ENCODE measurements at regions of chr6 and their contacts with region 1.

Region 1: GRCh38 chr6:73515204-73515655 is 5.6 kb downstream of the EEF1A1 start:
- DNase-seq: peak in 1 of 4 experiments; percentile 61
- ATAC-seq: peak; percentile 13
- H3K4me3 ChIP-seq: no peak overlapping the region
- H3K27ac ChIP-seq: peak overlapping the region; percentile 72
- H3K4me1 ChIP-seq: peaks cover 0 to 8% of the 10 kb centered on the region in 2 experiments; a peak in 2 of 5 replicates
- H3K27me3 ChIP-seq: no peaks in the 10 kb centered on the region
- CTCF ChIP-seq: no peak
- EP300 ChIP-seq: no peak
- POLR2A ChIP-seq: no peak
- RAD21 ChIP-seq: no peak

Region 2: DNA sequence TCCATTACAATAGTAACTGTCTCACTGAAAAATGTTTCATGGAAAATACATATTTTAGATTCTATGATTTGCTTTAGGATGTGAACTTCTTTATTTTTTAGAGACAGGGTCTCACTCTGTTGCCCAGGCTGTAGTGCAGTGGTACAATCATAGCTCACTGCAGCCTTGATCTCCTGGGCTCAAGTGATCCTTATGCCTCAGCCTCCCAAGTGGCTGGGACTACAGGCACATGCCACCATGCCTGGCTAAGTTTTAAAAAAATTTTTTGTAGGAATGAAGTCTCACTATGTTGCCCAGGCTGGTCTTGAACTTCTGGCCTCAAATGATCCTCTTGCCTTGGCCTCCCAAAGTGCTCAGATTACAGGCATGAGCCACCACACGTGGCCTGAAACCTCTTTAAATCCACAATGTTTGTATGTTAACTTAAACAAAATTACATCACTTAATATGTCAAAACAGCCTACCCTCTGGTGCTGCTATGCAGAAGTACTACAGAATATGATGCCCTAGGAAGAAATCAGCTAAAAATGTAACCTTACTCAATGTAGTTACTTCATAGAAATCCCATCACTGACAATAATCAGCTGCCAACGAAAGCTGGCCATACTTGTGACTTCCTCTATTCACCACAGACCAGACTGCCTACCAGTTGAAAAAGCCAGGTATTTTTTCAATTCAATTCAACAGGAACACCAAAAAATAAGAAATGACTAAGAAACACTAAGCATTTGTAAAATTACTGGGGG is 12.0 kb before region 1 on chr6:
- CTCF ChIA-PET with region 1: no interaction called
- POLR2A ChIA-PET with region 1: interaction called, 32 read pairs
- in situ Hi-C with region 1: no loop called
- intact Hi-C with region 1: no loop called
- DNase-seq: no peak
- ATAC-seq: peak; percentile 21; the same call in 2 of the 3 replicates
- H3K4me3 ChIP-seq: no peak overlapping the region
- H3K27ac ChIP-seq: no peak overlapping the region
- H3K4me1 ChIP-seq: no peaks in the 10 kb centered on the region
- H3K27me3 ChIP-seq: no peaks in the 10 kb centered on the region
- CTCF ChIP-seq: no peak
- EP300 ChIP-seq: no peak
- POLR2A ChIP-seq: no peak
- RAD21 ChIP-seq: no peak

Region 3: DNA sequence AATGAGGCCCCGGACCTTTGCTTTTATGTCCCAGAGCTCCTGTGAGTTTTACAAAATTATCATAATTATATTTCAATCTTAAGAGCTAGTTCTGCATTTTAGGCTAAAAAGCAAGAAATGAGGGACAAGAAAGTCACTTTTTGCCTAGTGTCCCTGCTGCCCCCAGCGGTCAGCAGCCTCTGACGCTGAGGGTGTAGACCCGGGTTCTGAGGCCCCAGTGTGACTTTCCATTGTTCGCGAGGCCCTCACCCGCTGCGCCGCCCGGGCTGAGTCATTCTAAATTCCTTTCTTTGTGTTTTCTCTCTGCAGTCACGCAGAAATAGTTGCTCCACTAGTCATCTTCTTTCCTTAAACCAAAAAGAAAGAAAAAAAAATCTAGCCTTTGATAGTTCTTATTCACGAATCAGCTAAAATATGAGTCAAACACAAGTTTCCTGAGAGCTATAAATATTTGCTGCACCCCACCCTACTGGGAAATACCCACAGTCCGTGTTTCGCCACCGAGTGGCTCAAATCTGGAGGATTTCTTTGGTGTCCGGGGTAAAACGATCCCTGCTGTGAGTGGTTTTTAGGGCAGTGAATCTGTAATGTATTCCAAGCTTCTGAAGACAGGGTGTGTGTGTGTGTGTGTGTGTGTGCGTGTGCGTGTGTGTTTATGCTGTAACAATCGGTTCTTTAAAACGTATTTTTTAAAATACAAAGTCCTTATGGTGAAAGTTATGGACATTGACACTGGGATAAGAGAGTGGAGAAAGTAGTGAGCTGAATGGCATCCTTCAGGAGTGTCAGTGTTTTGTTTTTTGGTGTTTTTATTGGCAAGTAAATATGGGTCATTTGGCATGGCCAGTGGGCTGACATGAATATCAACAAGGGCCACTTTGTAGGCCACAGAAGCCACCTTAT is 65.3 kb after region 1 on chr6:
- CTCF ChIA-PET with region 1: interaction called, 4 read pairs
- POLR2A ChIA-PET with region 1: interaction called, 38 read pairs
- in situ Hi-C with region 1: loop called (anchors 5 kb)
- intact Hi-C with region 1: no loop called
- DNase-seq: peak; percentile 81 to 93 (median 84)
- ATAC-seq: peak; percentile 98
- H3K4me3 ChIP-seq: peak overlapping the region; percentile 23
- H3K27ac ChIP-seq: peak overlapping the region; percentile 93
- H3K4me1 ChIP-seq: peaks cover 16 to 26% of the 10 kb centered on the region in 2 experiments
- H3K27me3 ChIP-seq: no peaks in the 10 kb centered on the region
- CTCF ChIP-seq: peak; percentile 75 to 88 (median 79)
- EP300 ChIP-seq: no peak
- POLR2A ChIP-seq: peak; percentile 76
- RAD21 ChIP-seq: peak; percentile 49 to 57; a peak in 3 of 4 replicates

Region 4: GRCh38 chr6:73585566-73586415 is 70.6 kb after region 1 on chr6:
- CTCF ChIA-PET with region 1: no interaction called
- POLR2A ChIA-PET with region 1: interaction called, 38 read pairs
- in situ Hi-C with region 1: loop called (anchors 5 kb)
- intact Hi-C with region 1: no loop called
- DNase-seq: peak; percentile 44 to 81 (median 58)
- ATAC-seq: peak; percentile 83
- H3K4me3 ChIP-seq: no peak overlapping the region
- H3K27ac ChIP-seq: peak overlapping the region; percentile 82
- H3K4me1 ChIP-seq: peaks cover 7 to 15% of the 10 kb centered on the region in 2 experiments; a peak in 4 of 5 replicates
- H3K27me3 ChIP-seq: no peaks in the 10 kb centered on the region
- CTCF ChIP-seq: no peak
- EP300 ChIP-seq: peak; percentile 75
- POLR2A ChIP-seq: no peak
- RAD21 ChIP-seq: 0 out of 4 replicates have a peak, but pooled peaks of 1 of the 2 experiments have one; percentile 5

Region 5: DNA sequence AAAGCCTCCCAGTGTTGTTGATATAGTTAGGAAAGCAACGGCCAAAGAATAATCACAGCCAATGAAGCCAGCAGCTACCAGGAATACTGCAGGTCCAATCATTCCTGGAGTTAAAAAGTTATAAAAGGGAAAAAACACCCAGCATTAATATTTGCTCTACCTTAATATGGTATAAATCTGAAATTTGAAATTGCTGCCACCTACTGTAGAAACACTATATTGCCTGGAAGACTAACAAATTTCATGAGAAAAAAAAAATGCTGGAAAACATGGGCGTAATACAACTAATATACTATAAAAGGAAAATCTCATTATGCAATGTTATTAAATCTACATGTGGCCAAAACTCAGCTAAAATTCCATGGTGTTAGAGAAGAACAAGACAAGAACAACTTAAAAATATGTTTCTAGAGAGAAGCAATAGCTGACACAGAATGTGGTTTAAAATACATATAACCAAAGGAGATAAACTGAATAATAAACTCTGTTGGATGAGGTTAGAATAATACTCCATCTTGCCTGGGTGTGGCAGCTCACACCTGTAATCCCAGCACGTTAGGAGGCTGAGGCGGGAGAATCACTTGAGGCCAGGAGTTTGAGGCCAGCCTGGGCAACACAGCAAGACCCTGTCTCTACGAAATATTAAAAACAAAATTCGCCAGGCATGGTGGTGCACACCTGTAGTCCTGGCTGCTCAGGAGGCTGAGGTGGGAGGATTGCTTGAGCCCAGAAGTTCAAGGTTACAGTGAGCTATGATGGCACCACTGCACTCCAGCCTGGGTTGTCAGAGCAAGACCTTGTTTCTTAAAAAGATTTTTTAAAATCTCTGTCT is 95.4 kb after region 1 on chr6:
- CTCF ChIA-PET with region 1: interaction called, 36 read pairs
- POLR2A ChIA-PET with region 1: interaction called, 34 read pairs
- in situ Hi-C with region 1: no loop called
- intact Hi-C with region 1: loop called (anchors 1 kb)
- DNase-seq: peak in 2 of 4 experiments; percentile 28 to 46
- ATAC-seq: peak; percentile 64
- H3K4me3 ChIP-seq: no peak overlapping the region
- H3K27ac ChIP-seq: no peak overlapping the region
- H3K4me1 ChIP-seq: no peaks in the 10 kb centered on the region
- H3K27me3 ChIP-seq: no peaks in the 10 kb centered on the region
- CTCF ChIP-seq: peak; percentile 41 to 72 (median 50); a peak in 4 of 6 replicates
- EP300 ChIP-seq: no peak
- POLR2A ChIP-seq: no peak
- RAD21 ChIP-seq: peak; percentile 83 to 86

Region 6: GRCh38 chr6:73631849-73632248 is 116.6 kb after region 1 on chr6:
- CTCF ChIA-PET with region 1: no interaction called
- POLR2A ChIA-PET with region 1: interaction called, 26 read pairs
- in situ Hi-C with region 1: no loop called
- intact Hi-C with region 1: no loop called
- DNase-seq: no peak
- ATAC-seq: no peak
- H3K4me3 ChIP-seq: no peak overlapping the region
- H3K27ac ChIP-seq: no peak overlapping the region
- H3K4me1 ChIP-seq: no peaks in the 10 kb centered on the region
- H3K27me3 ChIP-seq: no peaks in the 10 kb centered on the region
- CTCF ChIP-seq: no peak
- EP300 ChIP-seq: no peak
- POLR2A ChIP-seq: no peak
- RAD21 ChIP-seq: no peak

Region 7: GRCh38 chr6:73653571-73654424 is 138.6 kb after region 1 on chr6 and contains the start of gene SLC17A5:
- CTCF ChIA-PET with region 1: interaction called, 21 read pairs
- POLR2A ChIA-PET with region 1: interaction called, 91 read pairs
- in situ Hi-C with region 1: no loop called
- intact Hi-C with region 1: loop called (anchors 2 kb)
- DNase-seq: peak; percentile 92 to 96 (median 94)
- ATAC-seq: peak; percentile 96
- H3K4me3 ChIP-seq: peak within 1 kb of the TSS; percentile 90
- H3K27ac ChIP-seq: peak within 1 kb of the TSS; percentile 90
- H3K4me1 ChIP-seq: peaks cover 5 to 10% of the 10 kb centered on the region in 2 experiments; a peak in 3 of 5 replicates
- H3K27me3 ChIP-seq: no peaks in the 10 kb centered on the region
- CTCF ChIP-seq: no peak
- EP300 ChIP-seq: no peak; the same call in 1 of the 2 replicates
- POLR2A ChIP-seq: peak; percentile 87
- RAD21 ChIP-seq: no peak
- polyA plus RNA-seq, gene SLC17A5: 1.3 to 1.8 TPM